Activated CD4-positive, alpha-beta T cell treated with anti-CD3 and anti-CD28 coated beads, Interleukin-2, amount 10 ng/mL, durations not matched to agents 7 days and 5 days (primary cell): ENCODE measurements at regions of chr1 and their contacts with region 1.

Region 1: GRCh38 chr1:179809506-179810366 is 66.6 kb downstream of the FAM163A start:
- DNase-seq: peak; percentile 71
- H3K4me3 Mint-ChIP-seq: no peak overlapping the region
- H3K27ac Mint-ChIP-seq: no peak overlapping the region
- H3K4me1 Mint-ChIP-seq: peaks cover 9% of the 10 kb centered on the region
- H3K27me3 Mint-ChIP-seq: no peaks in the 10 kb centered on the region

Region 2: GRCh38 chr1:179706339-179706941 is 103.3 kb before region 1 on chr1:
- CTCF ChIA-PET with region 1: interaction called, 162 read pairs
- POLR2A ChIA-PET with region 1: no interaction called
- DNase-seq: peak; percentile 74
- H3K4me3 Mint-ChIP-seq: no peak overlapping the region
- H3K27ac Mint-ChIP-seq: no peak overlapping the region
- H3K4me1 Mint-ChIP-seq: peaks cover 4% of the 10 kb centered on the region
- H3K27me3 Mint-ChIP-seq: peaks cover 3% of the 10 kb centered on the region

Region 3: GRCh38 chr1:179824265-179824664 is 14.5 kb after region 1 on chr1:
- CTCF ChIA-PET with region 1: interaction called, 18 read pairs
- POLR2A ChIA-PET with region 1: no interaction called
- DNase-seq: no peak
- H3K4me3 Mint-ChIP-seq: no peak overlapping the region
- H3K27ac Mint-ChIP-seq: no peak overlapping the region
- H3K4me1 Mint-ChIP-seq: no peaks in the 10 kb centered on the region
- H3K27me3 Mint-ChIP-seq: no peaks in the 10 kb centered on the region